BJ (cell line): ENCODE measurements at regions of chr14 and their contacts with region 1.

Region 1: DNA sequence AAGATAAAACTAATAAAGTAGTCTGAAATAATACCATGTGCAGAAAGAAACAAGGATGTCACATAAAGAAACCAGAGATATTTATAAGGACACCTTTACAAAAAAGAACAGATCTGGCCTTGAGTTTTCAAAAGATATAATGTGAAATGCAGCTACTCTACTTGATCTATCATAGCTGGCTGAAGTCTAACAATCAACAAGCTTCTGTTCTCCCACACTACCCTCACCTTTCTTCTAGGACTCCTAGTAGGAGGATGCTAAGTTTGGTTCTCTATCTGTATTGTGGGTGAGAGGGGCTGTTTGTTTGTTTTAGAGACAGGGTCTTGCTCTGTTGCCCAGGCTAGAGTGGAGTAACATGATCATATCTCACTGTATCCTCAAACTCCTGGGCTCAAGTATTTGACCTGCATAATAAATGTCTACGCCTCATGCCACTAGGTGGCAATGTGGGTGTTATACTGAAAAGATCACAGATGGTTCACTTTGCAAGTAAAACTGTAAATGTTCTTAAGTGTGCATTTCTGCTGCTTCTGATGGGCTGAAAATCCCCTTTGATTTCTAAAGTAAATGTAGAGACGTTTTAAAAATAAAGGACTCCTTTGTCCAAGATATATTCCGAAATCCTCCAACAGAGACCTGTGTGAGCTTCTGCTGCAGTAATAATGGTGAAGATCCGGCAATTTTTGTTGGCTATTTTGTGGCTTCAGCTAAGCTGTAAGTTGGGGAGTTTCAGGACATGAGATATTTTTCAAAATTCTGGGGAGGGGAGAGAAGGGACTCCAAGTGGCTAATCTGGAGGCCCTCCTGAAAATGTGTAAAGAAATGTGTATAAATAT is 269.3 kb downstream of the DAD1 start:
- DNase-seq: no peak
- H3K4me3 ChIP-seq: no peak overlapping the region
- H3K27me3 ChIP-seq: no peaks in the 10 kb centered on the region; the same call in 1 of the 2 replicates
- CTCF ChIP-seq: peak; percentile 71

Region 2: GRCh38 chr14:22221508-22221907 is 98.2 kb before region 1 on chr14:
- CTCF ChIA-PET with region 1: no interaction called
- POLR2A ChIA-PET with region 1: interaction called, 36 read pairs
- DNase-seq: no peak
- H3K4me3 ChIP-seq: no peak overlapping the region
- H3K27me3 ChIP-seq: 0 out of 2 replicates have a peak, but pooled peaks cover 1% of the 10 kb centered on the region
- CTCF ChIP-seq: peak; percentile 42

Region 3: GRCh38 chr14:22303589-22304195 is 16.1 kb before region 1 on chr14:
- CTCF ChIA-PET with region 1: interaction called, 11 read pairs
- POLR2A ChIA-PET with region 1: no interaction called
- DNase-seq: no peak
- H3K4me3 ChIP-seq: no peak overlapping the region
- H3K27me3 ChIP-seq: peaks cover 5% of the 10 kb centered on the region; the same call in 1 of the 2 replicates
- CTCF ChIP-seq: peak; percentile 47

Region 4: DNA sequence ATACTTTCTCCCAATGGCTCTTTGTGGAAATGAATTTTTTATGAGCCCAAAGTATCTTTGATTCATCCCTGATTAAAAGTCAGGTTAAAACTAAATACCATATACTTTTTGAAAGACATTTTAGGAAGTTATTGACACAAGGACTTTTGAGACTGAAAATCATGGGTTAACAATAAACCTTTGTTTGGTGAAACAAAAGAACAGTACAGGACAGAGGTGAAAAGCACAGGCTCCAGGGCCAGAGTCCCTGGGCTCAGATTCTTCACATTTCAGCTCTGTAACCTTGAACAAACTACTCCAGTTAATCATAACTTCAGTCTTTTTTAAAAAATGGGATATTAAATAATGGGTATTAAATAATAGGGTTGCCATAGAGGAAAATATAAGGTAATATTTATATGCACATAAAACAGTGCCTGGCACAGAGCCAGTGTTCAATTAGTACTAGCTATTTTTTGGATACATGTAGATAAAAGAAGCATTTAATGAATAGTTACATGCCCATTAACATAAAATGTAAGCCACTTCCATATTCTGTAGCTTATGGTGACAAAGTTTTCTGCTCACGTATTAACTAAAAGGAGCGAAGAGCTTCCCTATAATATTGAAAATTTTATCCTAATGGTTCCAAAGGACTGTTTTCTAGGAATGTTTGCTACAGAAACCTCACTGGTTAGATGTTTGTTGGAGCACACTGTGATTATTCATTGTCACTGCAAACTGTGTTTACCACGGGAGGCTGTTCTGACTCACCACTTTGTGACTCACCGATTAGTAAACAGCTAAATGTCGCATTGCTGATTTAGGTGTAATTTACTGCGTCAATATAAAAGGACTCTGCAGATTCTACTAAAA is 13.9 kb after region 1 on chr14:
- CTCF ChIA-PET with region 1: interaction called, 19 read pairs
- POLR2A ChIA-PET with region 1: no interaction called
- DNase-seq: peak; percentile 17
- H3K4me3 ChIP-seq: no peak overlapping the region
- H3K27me3 ChIP-seq: no peaks in the 10 kb centered on the region
- CTCF ChIP-seq: no peak

Region 5: DNA sequence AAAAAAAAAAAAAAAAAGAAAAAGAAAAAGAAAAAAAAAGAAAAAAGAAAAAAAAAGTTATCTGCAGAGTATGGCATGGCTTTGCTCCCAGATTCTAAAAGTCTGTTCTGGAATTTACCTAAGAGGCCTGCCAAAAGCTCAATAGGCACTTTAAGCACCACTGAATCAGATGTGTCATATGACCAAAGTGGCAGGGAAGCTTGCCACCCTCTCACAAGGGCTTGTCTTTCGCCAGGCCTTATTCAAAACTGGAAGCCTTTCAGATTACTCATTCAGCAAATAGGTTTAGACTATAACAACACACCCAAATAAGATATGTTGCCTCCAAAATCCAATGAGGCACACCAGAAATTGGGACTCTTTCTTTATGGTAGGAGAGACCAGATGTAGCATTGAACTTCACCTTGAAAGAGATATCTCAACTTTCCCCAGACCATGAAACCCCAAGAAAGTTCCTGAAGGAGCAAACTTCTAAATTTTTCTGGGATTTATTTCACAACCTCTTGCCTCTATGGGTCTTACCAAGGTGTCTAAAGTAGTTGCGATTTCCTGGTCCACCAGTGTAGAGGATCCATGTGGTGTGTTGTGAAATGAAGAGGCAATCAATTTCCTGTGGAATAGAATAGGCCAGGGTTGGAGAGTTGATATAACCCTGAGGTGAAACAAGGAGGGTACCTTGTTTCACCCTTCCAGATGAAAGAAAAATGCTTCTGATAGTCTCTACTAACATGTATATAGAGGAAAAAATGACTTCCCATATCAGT is 50.5 kb after region 1 on chr14:
- CTCF ChIA-PET with region 1: interaction called, 26 read pairs
- POLR2A ChIA-PET with region 1: no interaction called
- DNase-seq: no peak
- H3K4me3 ChIP-seq: no peak overlapping the region
- H3K27me3 ChIP-seq: no peaks in the 10 kb centered on the region; the same call in 1 of the 2 replicates
- CTCF ChIP-seq: no peak

Region 6: DNA sequence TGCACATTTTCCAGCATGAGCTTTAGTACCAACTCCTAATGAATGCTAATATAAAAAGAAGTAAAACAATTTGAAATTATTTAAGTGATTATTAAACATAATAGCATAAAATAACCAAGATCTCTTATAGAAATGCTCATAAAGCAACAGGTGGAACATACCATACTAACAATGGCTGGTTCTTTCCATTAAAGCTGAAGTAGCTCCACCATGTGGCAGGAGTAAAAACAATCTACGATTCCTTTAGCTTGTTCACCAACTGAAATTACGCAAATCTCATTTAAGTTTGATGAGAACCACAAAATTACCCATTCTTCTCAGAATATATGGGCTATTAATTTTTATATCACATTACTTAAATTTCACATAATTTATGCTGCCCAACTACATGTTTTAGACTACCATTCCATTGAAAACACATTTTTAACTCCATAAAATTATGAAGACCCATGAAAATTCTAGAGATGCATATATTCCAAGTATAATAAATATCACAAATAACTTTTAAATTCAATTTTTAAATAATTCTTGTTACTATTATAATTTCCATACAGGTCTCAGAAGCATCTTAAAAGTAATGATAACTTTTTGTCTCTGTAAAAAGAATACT is 55.7 kb after region 1 on chr14:
- CTCF ChIA-PET with region 1: interaction called, 26 read pairs
- POLR2A ChIA-PET with region 1: no interaction called
- DNase-seq: no peak
- H3K4me3 ChIP-seq: no peak overlapping the region
- H3K27me3 ChIP-seq: peaks cover 3% of the 10 kb centered on the region
- CTCF ChIP-seq: peak; percentile 59

Region 7: GRCh38 chr14:22556990-22557623 is 237.4 kb after region 1 on chr14:
- CTCF ChIA-PET with region 1: no interaction called
- POLR2A ChIA-PET with region 1: no interaction called
- DNase-seq: no peak
- H3K4me3 ChIP-seq: peak overlapping the region; percentile 22
- H3K27me3 ChIP-seq: no peaks in the 10 kb centered on the region
- CTCF ChIP-seq: peak; percentile 96